ENCODE measurements at regions of chr1 and their contacts with region 1.

Region 1: DNA sequence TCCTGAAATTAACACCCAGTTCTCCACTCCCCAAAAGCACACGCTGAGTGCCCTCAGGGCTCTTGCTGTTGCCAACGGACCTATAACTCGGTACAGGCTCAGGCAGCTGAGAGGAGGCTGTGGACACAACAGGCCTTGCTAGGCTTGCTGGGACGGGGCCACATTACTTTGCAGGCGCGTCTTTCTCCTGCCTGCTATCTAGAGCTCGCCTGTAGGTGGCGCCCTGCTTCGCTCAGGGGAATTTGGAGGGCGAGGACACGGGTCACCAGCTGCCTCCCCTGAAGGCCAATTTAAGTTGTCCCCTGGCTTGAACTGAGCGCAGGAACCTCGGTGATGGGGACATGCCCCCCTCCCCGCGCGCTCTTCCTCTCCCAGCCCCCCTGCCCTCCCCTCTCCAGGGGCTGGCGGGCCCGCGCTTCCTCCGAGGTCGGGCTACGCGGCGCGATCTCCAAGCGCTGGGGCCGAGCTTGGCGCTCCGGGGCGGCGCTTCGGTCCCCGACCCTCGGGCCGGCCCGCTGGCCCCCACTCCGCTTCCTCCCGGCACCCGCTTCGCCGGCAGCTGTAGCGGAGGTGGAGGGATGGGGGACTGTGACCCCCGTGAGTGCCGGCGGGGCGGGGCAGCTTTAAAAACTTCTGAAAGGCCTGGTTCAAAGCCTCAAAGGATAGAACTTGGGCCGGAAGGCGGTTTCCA is 32.4 kb upstream of the NFIA start:
- DNase-seq: peak; percentile 90
- ATAC-seq: peak; percentile 86
- H3K4me3 Mint-ChIP-seq: peak overlapping the region; percentile 69
- H3K27ac Mint-ChIP-seq: no peak overlapping the region
- H3K4me1 Mint-ChIP-seq: peaks cover 31% of the 10 kb centered on the region
- H3K27me3 Mint-ChIP-seq: peaks cover 50% of the 10 kb centered on the region

Region 2: DNA sequence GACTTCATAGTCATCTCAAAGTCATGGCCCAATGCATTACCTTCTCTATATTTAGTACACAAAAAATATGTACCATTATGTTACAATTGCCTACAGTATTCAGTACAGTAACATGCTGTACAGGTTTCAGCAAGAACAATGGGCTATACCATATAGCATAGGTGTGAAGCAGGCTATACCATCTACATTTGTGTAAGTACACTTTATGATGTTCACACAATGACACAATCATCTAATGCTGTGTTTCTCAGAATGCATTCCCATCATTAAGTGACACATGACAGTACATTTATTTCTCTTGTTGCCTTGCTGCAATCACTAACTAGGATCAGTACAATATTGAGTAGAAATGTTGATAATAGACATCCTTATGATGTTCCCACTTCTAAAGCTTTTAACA is 14.1 kb before region 1 on chr1:
- CTCF ChIA-PET with region 1: interaction called, 13 read pairs
- POLR2A ChIA-PET with region 1: no interaction called
- DNase-seq: no peak
- ATAC-seq: no peak
- H3K4me3 Mint-ChIP-seq: no peak overlapping the region
- H3K27ac Mint-ChIP-seq: no peak overlapping the region
- H3K4me1 Mint-ChIP-seq: no peaks in the 10 kb centered on the region
- H3K27me3 Mint-ChIP-seq: peaks cover 5% of the 10 kb centered on the region

Region 3: DNA sequence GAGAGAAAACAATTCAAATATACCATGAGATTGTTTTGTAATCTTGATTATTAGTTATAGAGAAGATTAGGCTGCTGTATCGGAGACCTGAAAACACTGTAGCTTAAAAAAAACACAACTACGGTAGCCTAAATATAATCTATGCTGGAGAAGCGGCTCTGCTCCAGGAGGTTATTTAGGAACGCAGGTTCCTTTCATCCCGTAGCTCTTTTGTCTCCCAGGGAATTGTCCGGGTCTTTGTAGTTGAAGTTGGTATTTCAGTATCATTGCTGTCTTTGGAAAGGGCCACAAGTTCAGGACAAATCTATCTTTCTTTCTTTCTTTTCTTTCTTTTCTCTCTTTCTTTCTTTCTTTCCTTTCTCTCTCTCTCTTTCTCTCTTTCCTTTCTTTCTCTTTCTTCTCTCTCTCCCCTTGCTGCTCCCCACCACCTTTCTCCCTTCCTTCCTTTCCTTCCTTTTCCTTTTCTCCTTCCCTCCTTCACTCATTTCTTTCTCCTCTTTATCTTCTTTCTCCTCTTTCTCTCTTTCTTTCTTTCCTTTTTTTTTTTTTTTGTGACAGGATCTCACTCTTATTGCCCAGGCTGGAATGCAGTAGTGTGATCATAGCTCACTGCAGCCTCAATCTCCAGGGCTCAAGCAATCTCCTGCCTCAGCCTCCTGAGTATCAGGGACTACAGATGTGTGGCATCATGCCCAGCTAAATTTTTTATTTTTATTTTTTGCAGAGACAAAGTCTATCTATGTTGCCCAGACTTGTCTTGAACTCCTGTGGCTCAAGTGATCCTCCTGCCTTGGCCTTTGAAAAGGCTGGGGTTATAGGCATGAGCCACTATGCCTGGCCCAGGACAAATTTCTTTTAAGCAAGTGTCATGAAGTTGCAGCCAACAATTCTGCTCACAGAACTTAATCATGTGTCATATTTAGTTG is 21.5 kb after region 1 on chr1:
- CTCF ChIA-PET with region 1: interaction called, 45 read pairs
- POLR2A ChIA-PET with region 1: interaction called, 9 read pairs
- DNase-seq: no peak
- ATAC-seq: no peak
- H3K4me3 Mint-ChIP-seq: no peak overlapping the region
- H3K27ac Mint-ChIP-seq: no peak overlapping the region
- H3K4me1 Mint-ChIP-seq: peaks cover 4% of the 10 kb centered on the region
- H3K27me3 Mint-ChIP-seq: peaks cover 16% of the 10 kb centered on the region

Region 4: GRCh38 chr1:61077676-61078541 is 27.9 kb after region 1 on chr1:
- CTCF ChIA-PET with region 1: interaction called, 45 read pairs
- POLR2A ChIA-PET with region 1: interaction called, 9 read pairs
- DNase-seq: peak; percentile 95
- ATAC-seq: peak; percentile 85
- H3K4me3 Mint-ChIP-seq: peak overlapping the region; percentile 89
- H3K27ac Mint-ChIP-seq: peak overlapping the region; percentile 95
- H3K4me1 Mint-ChIP-seq: peaks cover 41% of the 10 kb centered on the region
- H3K27me3 Mint-ChIP-seq: peaks cover 34% of the 10 kb centered on the region

Region 5: DNA sequence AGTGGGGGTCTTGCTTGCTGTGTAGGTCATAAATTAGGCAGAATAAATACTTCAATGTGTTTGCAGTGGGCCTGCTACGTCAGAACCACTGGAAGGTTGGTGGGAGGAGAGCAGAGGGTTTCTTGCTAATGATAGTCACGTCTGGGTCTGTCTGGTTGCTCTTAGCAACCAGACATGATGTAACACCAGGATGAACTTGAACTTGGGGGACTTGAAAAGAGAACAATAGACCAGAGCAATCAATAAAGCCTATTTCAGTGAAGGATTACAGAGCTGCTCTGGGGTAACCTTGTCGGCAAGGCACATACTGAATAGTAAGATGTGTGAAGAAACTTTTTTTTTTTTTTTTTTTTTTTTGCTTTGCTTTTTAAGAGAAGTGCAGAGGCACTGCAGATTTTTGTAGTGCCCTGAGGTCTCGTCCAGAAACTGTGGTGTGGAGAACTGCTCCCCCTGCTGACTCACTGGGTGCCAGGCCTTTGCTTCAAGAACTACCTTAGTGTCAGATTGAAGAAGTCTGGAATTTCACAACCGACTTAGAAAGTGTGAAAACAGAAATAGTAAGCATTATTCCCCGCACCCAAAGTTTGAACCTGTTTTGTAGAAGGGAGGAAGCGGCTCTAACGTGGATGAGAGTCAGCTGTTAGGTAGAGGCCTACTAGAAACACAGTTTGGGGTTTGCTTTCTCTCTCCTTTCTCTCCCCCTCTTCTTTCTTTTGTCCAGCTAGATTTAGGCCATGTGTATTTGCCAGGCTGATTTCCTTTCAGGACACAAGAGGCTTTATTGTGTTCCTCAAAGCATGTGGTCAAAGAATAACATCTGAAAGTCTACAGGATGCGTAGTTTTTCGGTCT is 403.3 kb after region 1 on chr1:
- CTCF ChIA-PET with region 1: interaction called, 11 read pairs
- POLR2A ChIA-PET with region 1: no interaction called
- DNase-seq: peak; percentile 76
- ATAC-seq: peak; percentile 84
- H3K4me3 Mint-ChIP-seq: no peak overlapping the region
- H3K27ac Mint-ChIP-seq: peak overlapping the region; percentile 30
- H3K4me1 Mint-ChIP-seq: peaks cover 9% of the 10 kb centered on the region
- H3K27me3 Mint-ChIP-seq: peaks cover 3% of the 10 kb centered on the region

Region 6: GRCh38 chr1:61588736-61589672 is 539.0 kb after region 1 on chr1:
- CTCF ChIA-PET with region 1: interaction called, 19 read pairs
- POLR2A ChIA-PET with region 1: no interaction called
- DNase-seq: peak; percentile 81
- ATAC-seq: peak; percentile 99
- H3K4me3 Mint-ChIP-seq: no peak overlapping the region
- H3K27ac Mint-ChIP-seq: no peak overlapping the region
- H3K4me1 Mint-ChIP-seq: peaks cover 4% of the 10 kb centered on the region
- H3K27me3 Mint-ChIP-seq: peaks cover 7% of the 10 kb centered on the region